GM10248 (cell line): ENCODE measurements at regions of chr17 and their contacts with region 1.

Region 1: DNA sequence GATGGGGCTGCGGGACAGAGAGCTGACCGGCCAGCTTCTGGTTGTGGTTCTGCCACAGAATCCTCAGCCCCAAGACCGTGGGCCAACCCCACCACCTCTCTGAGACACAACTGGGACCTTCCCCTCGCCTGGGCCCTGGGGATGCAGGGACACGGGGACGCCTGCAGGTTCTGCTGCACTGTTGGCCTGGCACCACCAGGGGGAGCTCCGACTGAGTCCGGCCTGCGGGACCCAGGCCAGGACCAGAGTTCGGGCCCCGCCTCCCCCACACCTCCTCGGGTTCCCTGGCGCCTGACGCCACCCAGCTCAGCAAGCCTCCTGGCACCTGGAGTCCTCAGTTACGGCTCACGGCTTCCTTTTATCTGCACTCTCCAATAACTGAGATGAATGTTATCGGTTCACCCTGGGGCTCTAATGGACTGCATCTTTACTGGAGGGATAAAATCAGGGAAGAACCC is 27.3 kb downstream of the TBC1D16 start:
- DNase-seq: peak; percentile 90
- CTCF ChIP-seq: peak; percentile 98

Region 2: DNA sequence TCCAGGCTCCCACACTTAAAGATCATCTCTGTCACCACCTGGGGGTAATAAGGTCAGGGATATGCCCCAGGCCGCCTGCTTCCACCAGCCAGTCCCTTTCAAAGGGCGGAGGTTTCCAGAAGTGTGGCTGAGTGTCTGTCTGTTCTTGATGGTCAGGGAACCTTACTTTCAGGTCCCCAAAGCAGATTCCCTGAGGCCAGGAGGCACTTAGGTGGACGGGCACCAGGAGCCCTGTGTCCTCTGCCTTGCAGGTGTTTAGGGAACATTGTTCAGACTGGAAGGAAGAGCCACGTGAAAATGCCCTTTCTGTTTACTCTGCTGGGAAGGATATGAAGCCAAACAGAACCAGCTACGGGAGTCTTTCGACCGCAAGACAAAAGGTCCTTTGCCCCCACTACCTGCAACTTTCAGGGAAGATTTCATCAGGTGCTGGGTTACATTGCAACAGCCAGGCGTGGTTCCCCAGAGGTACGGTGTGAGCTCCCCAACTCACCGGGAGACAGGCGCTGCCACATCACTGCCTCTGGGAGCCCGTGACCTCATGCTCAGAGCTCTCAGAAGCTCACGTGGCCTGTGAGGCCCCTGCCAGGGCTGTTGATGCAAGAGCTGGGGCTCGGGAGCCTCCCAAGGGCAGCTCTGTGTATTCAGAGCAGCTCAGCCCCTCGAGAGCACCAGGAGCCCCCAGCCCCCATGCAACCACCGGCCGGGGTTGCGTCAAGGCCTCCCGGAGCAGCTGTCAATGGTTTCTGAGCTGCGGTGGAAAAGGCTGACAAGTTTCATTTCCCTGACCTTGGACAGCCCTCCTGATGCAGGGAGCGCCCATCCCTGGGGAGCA is 15.0 kb before region 1 on chr17:
- CTCF ChIA-PET with region 1: interaction called, 19 read pairs
- POLR2A ChIA-PET with region 1: no interaction called
- DNase-seq: peak; percentile 51
- CTCF ChIP-seq: no peak

Region 3: GRCh38 chr17:80023481-80024205 is 15.2 kb after region 1 on chr17:
- CTCF ChIA-PET with region 1: interaction called, 37 read pairs
- POLR2A ChIA-PET with region 1: no interaction called
- DNase-seq: no peak
- CTCF ChIP-seq: no peak